ENCODE measurements at regions of chr3 and their contacts with region 1.

Region 1: GRCh38 chr3:195850857-195851543 is 39.3 kb upstream of the MUC4 start:
- DNase-seq: peak; percentile 62
- ATAC-seq: peak; percentile 97
- H3K4me3 ChIP-seq: no peak overlapping the region
- H3K27ac ChIP-seq: no peak overlapping the region
- H3K4me1 ChIP-seq: peaks cover 3% of the 10 kb centered on the region; the same call in 1 of the 2 replicates
- H3K27me3 ChIP-seq: no peaks in the 10 kb centered on the region
- CTCF ChIP-seq: peak; percentile 100; a peak in 5 of 6 replicates
- EP300 ChIP-seq: no peak
- POLR2A ChIP-seq: no peak
- RAD21 ChIP-seq: peak; percentile 100

Region 2: DNA sequence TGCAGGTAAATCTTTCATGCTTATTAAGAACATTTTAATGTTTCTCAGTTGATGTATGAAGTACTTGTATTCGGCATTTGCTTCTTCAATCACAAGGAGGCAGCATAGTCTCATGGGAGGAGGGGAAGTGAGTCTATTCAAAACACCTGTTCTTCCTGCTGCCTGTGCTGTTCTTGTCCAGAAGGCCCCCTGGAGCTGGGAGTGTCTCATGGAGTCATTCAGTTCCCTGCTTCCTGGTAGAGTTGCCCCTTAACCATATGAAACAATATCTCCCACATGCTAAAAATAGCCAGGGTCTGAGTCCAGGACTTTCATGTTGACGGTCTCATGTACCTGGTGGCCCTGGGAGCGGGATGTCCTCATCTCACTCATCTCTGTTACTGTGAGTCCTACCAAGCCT is 292.4 kb before region 1 on chr3:
- CTCF ChIA-PET with region 1: no interaction called
- POLR2A ChIA-PET with region 1: no interaction called
- RAD21 ChIA-PET with region 1: interaction called, 3 read pairs
- SMC1A ChIA-PET with region 1: interaction called, 3 read pairs
- in situ Hi-C with region 1: no loop called
- intact Hi-C with region 1: loop called (anchors 2 kb)
- DNase-seq: no peak
- ATAC-seq: peak; percentile 82
- H3K4me3 ChIP-seq: no peak overlapping the region
- H3K27ac ChIP-seq: no peak overlapping the region
- H3K4me1 ChIP-seq: no peaks in the 10 kb centered on the region
- H3K27me3 ChIP-seq: no peaks in the 10 kb centered on the region
- CTCF ChIP-seq: peak; percentile 61 to 77 (median 65); a peak in 5 of 6 replicates
- EP300 ChIP-seq: no peak
- POLR2A ChIP-seq: no peak
- RAD21 ChIP-seq: peak; percentile 84

Region 3: DNA sequence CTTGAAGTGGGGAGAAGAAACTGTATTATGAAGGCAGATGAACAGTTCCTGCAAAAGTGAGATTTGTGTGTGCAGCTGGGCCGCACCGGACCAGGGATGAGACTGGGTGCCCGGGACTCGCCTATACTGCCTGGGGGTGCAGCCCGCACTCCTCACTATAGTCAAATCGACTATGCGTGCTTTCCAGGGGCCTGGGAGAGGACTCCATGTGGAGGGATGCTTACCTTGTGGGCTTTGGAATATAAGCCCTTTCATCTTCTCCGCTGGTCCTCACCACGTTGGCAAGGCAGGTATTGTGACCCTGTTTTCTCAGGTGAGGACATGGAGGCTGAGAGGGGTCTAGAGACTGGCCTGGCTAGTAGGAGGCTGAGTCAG is 234.3 kb before region 1 on chr3:
- CTCF ChIA-PET with region 1: interaction called, 4 read pairs
- POLR2A ChIA-PET with region 1: no interaction called
- RAD21 ChIA-PET with region 1: no interaction called
- SMC1A ChIA-PET with region 1: no interaction called
- in situ Hi-C with region 1: loop called (anchors 10 kb)
- intact Hi-C with region 1: loop called (anchors 5 kb)
- DNase-seq: no peak
- ATAC-seq: no peak
- H3K4me3 ChIP-seq: no peak overlapping the region
- H3K27ac ChIP-seq: no peak overlapping the region
- H3K4me1 ChIP-seq: no peaks in the 10 kb centered on the region
- H3K27me3 ChIP-seq: no peaks in the 10 kb centered on the region; a peak in 2 of 4 replicates
- CTCF ChIP-seq: no peak
- EP300 ChIP-seq: no peak
- POLR2A ChIP-seq: no peak
- RAD21 ChIP-seq: no peak

Region 4: GRCh38 chr3:195839282-195840010 is 11.6 kb before region 1 on chr3:
- CTCF ChIA-PET with region 1: interaction called, 16 read pairs
- POLR2A ChIA-PET with region 1: no interaction called
- RAD21 ChIA-PET with region 1: interaction called, 3 read pairs
- SMC1A ChIA-PET with region 1: interaction called, 4 read pairs
- in situ Hi-C with region 1: no loop called
- intact Hi-C with region 1: no loop called
- DNase-seq: no peak
- ATAC-seq: peak; percentile 18; the same call in 1 of the 3 replicates
- H3K4me3 ChIP-seq: no peak overlapping the region
- H3K27ac ChIP-seq: no peak overlapping the region
- H3K4me1 ChIP-seq: peaks cover 10% of the 10 kb centered on the region
- H3K27me3 ChIP-seq: no peaks in the 10 kb centered on the region; a peak in 2 of 4 replicates
- CTCF ChIP-seq: no peak
- EP300 ChIP-seq: no peak
- POLR2A ChIP-seq: no peak
- RAD21 ChIP-seq: no peak

Region 5: GRCh38 chr3:195863121-195864006 is 12.4 kb after region 1 on chr3:
- CTCF ChIA-PET with region 1: interaction called, 14 read pairs
- POLR2A ChIA-PET with region 1: no interaction called
- RAD21 ChIA-PET with region 1: no interaction called
- SMC1A ChIA-PET with region 1: interaction called, 3 read pairs
- in situ Hi-C with region 1: no loop called
- intact Hi-C with region 1: no loop called
- DNase-seq: no peak
- ATAC-seq: peak; percentile 97
- H3K4me3 ChIP-seq: no peak overlapping the region
- H3K27ac ChIP-seq: no peak overlapping the region
- H3K4me1 ChIP-seq: no peaks in the 10 kb centered on the region
- H3K27me3 ChIP-seq: no peaks in the 10 kb centered on the region
- CTCF ChIP-seq: peak; percentile 77 to 96 (median 80)
- EP300 ChIP-seq: no peak
- POLR2A ChIP-seq: no peak
- RAD21 ChIP-seq: peak; percentile 62

Region 6: GRCh38 chr3:195894780-195895607 is 44.0 kb after region 1 on chr3:
- CTCF ChIA-PET with region 1: interaction called, 7 read pairs
- POLR2A ChIA-PET with region 1: interaction called, 3 read pairs
- RAD21 ChIA-PET with region 1: interaction called, 10 read pairs
- SMC1A ChIA-PET with region 1: no interaction called
- in situ Hi-C with region 1: loop called (anchors 5 kb)
- intact Hi-C with region 1: no loop called
- DNase-seq: peak; percentile 42
- ATAC-seq: peak; percentile 89
- H3K4me3 ChIP-seq: peak overlapping the region; percentile 90
- H3K27ac ChIP-seq: peak overlapping the region; percentile 79; the same call in 1 of the 2 replicates
- H3K4me1 ChIP-seq: peaks cover 19% of the 10 kb centered on the region
- H3K27me3 ChIP-seq: no peaks in the 10 kb centered on the region
- CTCF ChIP-seq: peak; percentile 87 to 96 (median 91)
- EP300 ChIP-seq: no peak
- POLR2A ChIP-seq: peak; percentile 70
- RAD21 ChIP-seq: peak; percentile 90

Region 7: DNA sequence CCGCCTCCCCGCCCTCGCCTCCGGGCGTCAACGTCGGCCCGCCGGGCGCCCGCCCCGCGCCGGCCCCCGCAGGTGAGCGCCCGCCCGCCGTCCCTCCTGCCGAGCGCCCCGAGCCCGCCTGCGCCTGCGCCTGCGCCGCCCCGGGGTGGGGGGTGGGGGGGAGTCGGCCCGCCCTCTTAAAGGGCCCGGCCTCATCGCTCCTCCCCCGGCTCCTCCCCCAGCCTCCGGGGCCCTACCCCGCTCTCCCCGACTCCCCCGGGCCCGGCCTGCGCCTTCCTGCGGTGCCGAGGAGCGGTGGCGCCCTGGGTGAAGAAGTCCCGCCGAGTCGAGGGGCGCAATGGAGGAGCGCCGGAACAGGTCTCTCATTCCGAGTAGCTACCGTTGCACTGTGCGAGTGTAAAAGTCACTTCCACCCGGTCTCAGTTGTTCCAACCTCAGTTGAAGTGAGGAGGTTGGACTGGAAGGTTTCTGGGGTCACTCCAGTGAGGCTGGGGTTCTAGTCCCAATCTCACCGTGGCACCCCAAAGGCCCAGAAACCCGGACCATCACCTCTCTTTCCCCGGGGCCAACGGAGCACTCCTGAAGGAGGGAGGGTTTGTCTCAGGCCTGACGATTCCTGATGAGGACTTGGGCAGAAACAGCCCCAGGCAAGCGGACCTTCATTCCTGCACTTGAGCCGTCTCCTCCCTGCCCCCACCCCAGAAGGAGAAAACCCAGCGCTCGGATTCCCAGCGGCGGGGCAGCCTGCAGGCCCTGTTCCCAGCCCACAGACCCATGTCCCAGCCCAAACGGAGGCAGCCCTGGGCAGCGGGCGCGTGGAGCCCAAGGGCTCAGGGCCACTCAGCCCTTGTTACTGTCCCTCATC is 58.9 kb after region 1 on chr3:
- CTCF ChIA-PET with region 1: interaction called, 173 read pairs
- POLR2A ChIA-PET with region 1: no interaction called
- RAD21 ChIA-PET with region 1: interaction called, 5 read pairs
- SMC1A ChIA-PET with region 1: interaction called, 14 read pairs
- in situ Hi-C with region 1: no loop called
- intact Hi-C with region 1: no loop called
- DNase-seq: no peak
- ATAC-seq: peak; percentile 54
- H3K4me3 ChIP-seq: peak overlapping the region; percentile 74
- H3K27ac ChIP-seq: peak overlapping the region; percentile 28; the same call in 1 of the 2 replicates
- H3K4me1 ChIP-seq: peaks cover 13% of the 10 kb centered on the region
- H3K27me3 ChIP-seq: no peaks in the 10 kb centered on the region
- CTCF ChIP-seq: no peak
- EP300 ChIP-seq: no peak
- POLR2A ChIP-seq: peak; percentile 62
- RAD21 ChIP-seq: no peak